HCT116 (cell line): ENCODE measurements at regions of chr1 and their contacts with region 1.

Region 1: DNA sequence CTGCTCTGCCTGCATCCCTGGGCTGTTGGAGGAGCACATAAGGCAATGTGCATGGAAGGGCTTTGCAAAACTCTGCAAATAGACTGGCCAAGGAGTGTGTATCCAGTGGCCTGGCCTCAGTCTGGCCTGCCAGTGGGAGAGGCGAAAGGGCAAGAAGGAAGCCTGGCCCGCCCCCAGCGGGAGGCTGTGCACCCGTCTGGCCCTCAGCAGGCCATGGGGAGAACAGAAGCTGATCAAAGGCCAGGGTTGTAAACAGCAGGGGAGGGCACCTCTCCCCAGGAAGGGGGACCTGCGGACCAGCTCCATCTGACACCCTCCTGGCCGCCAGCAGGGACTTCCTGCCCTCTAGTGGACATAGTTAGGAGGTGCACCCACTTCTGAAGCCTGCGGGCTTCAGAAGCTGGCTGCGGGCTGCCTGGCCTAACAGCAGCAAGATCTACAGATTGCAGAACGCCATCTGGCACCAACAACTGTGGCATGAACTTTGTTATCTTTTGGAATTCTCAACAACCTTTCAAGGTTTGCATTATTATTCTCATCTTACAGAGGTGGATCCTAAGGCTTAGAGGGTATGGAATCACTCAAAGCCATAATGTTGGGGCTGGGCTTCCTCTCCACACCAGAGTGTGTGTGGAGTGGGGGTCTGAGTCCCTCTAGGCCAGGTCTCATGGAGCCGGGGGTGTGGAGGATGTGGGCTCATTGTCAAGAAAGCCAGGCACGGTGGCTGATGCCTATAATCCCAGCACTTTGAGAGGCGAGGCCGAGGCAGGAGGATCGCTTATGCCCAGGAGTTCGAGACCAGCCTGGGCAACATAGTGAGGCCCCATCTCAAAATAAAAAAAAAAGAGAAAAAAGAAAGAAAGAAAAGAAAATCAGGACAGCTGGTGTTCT is 18.9 kb upstream of the CDK18 start:
- DNase-seq: peak; percentile 56
- ATAC-seq: peak; percentile 83
- H3K4me3 ChIP-seq: no peak overlapping the region
- H3K27ac ChIP-seq: no peak overlapping the region
- H3K4me1 ChIP-seq: peaks cover 0 to 8% of the 10 kb centered on the region in 2 experiments; a peak in 3 of 4 replicates
- H3K27me3 ChIP-seq: peaks cover 18% of the 10 kb centered on the region
- CTCF ChIP-seq: peak; percentile 93 to 98 (median 95)
- POLR2A ChIP-seq: no peak
- RAD21 ChIP-seq: peak; percentile 100

Region 2: GRCh38 chr1:205211169-205211838 is 274.3 kb before region 1 on chr1 and contains the start of gene DSTYK:
- CTCF ChIA-PET with region 1: no interaction called
- POLR2A ChIA-PET with region 1: no interaction called
- RAD21 ChIA-PET with region 1: no interaction called
- intact Hi-C with region 1: no loop called
- DNase-seq: peak; percentile 92
- ATAC-seq: peak; percentile 91
- H3K4me3 ChIP-seq: peak within 1 kb of the TSS; percentile 74 to 99
- H3K27ac ChIP-seq: peak within 1 kb of the TSS; percentile 74
- H3K4me1 ChIP-seq: peaks cover 2 to 16% of the 10 kb centered on the region in 2 experiments; a peak in 2 of 4 replicates
- H3K27me3 ChIP-seq: no peaks in the 10 kb centered on the region
- CTCF ChIP-seq: no peak
- POLR2A ChIP-seq: peak; percentile 86
- RAD21 ChIP-seq: peak; percentile 40
- total RNA-seq, gene DSTYK: 6.6 TPM

Region 3: DNA sequence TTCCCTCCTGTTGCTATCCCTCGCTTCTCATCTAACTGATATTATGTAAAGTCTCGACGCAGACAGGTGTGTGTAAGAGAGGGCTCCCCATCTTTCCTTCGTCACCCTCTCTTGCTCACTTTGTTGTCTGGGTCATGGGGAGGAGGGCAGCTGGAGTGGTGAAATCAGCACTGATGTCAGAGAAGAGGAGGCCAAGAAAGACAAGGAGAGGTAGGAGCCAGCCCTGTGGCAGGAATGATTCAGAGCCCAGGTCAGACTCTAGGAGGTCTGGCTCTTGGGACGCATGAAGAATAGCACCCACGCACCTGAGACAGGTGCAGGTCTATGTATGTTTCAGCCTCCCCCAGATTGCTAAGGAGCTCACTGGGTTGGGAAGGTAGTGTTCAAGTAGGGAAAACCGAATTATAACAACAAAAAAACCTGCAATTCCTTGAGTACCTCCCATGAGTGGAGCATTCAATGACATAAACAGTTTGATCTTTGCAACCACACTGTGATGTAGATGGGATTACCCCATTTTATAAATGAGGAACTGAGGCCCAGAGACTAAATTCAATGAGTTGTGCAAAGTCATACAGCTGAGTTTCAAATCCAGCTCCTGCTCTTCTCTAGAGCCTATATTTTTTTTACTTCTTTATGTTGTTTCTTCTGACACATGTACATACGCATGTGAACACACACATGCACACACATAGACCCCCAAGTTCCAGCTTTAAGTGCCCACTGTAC is 174.4 kb before region 1 on chr1:
- CTCF ChIA-PET with region 1: no interaction called
- POLR2A ChIA-PET with region 1: no interaction called
- RAD21 ChIA-PET with region 1: no interaction called
- intact Hi-C with region 1: no loop called
- DNase-seq: no peak
- ATAC-seq: no peak
- H3K4me3 ChIP-seq: no peak overlapping the region
- H3K27ac ChIP-seq: no peak overlapping the region
- H3K4me1 ChIP-seq: peaks cover 0 to 3% of the 10 kb centered on the region in 2 experiments; a peak in 1 of 4 replicates
- H3K27me3 ChIP-seq: no peaks in the 10 kb centered on the region
- CTCF ChIP-seq: no peak
- POLR2A ChIP-seq: no peak
- RAD21 ChIP-seq: no peak

Region 4: DNA sequence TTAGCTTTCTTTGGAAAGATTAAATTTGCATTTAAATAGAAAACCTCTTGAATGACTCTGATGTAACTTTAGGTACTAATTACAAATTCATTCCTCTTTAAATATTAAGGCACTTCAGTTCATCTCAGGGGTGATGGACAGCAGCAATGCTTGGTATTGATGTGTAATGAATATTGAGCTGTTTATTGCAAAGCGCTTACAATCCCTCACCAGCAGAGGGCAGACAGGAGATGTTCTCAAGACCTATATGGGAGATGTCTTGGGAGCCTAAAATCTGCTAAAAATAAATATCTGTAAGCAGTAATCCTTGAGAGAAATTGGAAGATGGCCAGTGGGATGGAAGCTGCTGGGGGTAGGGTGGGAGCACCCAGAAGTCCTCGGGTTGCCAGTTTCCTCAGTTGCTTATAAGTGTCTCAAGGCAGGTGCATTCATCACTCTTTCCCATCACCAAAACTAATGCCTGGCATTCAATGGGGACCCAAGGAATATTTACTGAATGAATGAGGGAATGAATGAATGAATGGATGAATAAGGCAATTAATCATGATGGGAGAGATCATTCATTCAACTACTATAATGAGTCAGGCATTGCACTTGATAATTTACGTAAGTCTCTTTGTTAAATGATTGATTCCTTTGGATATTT is 131.2 kb before region 1 on chr1:
- CTCF ChIA-PET with region 1: interaction called, 49 read pairs
- POLR2A ChIA-PET with region 1: interaction called, 3 read pairs
- RAD21 ChIA-PET with region 1: interaction called, 10 read pairs
- intact Hi-C with region 1: loop called (anchors 1 kb)
- DNase-seq: peak; percentile 54
- ATAC-seq: peak; percentile 80
- H3K4me3 ChIP-seq: no peak overlapping the region
- H3K27ac ChIP-seq: no peak overlapping the region
- H3K4me1 ChIP-seq: peaks cover 2 to 23% of the 10 kb centered on the region in 2 experiments; a peak in 3 of 4 replicates
- H3K27me3 ChIP-seq: no peaks in the 10 kb centered on the region
- CTCF ChIP-seq: peak; percentile 75 to 86 (median 84)
- POLR2A ChIP-seq: no peak
- RAD21 ChIP-seq: peak; percentile 74

Region 5: DNA sequence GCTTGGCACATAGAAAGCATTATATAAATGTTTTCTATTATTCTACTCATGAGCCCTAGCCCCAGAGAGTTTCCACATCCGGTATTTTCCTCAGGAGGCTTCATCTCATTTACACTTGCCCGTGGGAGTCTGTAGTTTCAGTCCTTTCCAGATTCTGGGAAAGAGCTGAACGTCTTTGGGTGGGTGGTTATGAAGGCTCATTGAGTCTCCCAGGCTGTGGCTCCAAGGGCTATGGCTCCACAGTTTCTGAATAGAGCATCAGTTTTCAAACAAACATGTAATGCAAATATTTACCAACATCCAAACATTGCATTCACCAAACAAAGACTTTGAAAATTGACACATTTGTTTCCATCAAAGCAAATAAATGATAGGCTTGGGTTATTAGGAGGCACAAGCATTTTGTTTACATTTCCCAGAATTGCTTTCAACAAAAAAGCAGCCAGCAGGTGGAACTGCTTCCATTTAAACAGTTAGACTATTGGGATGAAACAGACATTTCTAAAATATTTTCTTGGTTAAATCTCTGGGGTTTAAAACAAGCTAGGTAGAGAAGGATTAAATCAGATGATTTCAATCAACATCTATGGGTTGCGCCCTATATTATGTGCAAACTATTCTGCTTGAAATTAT is 62.5 kb before region 1 on chr1:
- CTCF ChIA-PET with region 1: interaction called, 12 read pairs
- POLR2A ChIA-PET with region 1: no interaction called
- RAD21 ChIA-PET with region 1: no interaction called
- intact Hi-C with region 1: loop called (anchors 1 kb)
- DNase-seq: no peak
- ATAC-seq: no peak
- H3K4me3 ChIP-seq: no peak overlapping the region
- H3K27ac ChIP-seq: no peak overlapping the region
- H3K4me1 ChIP-seq: no peaks in the 10 kb centered on the region
- H3K27me3 ChIP-seq: peaks cover 29% of the 10 kb centered on the region
- CTCF ChIP-seq: peak in 2 of 3 experiments; percentile 45 to 68; a peak in 3 of 6 replicates
- POLR2A ChIP-seq: no peak
- RAD21 ChIP-seq: peak; percentile 69

Region 6: DNA sequence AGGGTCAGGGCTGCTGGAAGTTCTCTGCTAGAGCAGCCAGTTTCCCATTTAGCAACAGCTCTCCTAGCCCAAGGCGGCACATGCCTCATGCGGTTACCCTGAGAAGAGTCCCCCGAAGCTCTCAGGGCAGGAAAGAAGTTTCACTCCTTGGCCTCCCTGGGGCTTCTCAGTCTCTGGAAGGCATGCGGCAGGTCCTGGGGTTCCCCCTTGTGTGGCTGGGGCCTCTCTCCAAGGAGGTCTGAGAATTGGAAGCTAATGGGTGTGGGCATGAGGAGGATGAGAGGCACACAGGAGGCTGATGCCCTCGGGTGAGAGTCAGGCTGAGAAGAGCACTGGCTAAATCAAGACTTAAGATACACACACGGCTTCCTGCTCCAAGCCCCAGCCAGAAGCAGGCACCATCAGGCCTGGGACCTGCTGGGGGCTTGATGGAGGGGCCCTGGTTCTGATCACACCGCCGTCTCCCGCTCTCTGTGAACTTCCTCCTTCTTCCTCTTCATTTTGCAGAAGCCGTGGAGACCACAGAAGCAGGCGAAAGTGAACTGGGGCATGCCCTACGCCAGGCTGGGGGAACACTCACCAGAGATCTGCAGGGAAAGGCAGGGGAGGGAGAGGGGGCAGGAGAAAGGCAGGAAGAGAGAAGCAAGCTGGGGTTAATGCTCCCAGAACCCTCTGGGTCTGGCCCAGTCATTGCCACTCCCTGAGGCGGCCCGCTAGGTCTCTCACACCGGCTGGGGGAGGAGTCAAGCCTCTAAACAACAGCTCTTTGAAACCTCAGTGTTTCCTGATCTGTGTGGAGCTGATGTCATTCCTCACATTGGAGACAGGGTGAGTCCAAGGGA is 44.9 kb before region 1 on chr1:
- CTCF ChIA-PET with region 1: interaction called, 37 read pairs
- POLR2A ChIA-PET with region 1: interaction called, 8 read pairs
- RAD21 ChIA-PET with region 1: interaction called, 11 to 17 read pairs
- intact Hi-C with region 1: loop called (anchors 5 kb)
- DNase-seq: peak; percentile 85
- ATAC-seq: peak; percentile 86
- H3K4me3 ChIP-seq: peak overlapping the region in 1 of 2 experiments; percentile 21; a peak in 1 of 4 replicates
- H3K27ac ChIP-seq: peak overlapping the region; percentile 80
- H3K4me1 ChIP-seq: peaks cover 54 to 76% of the 10 kb centered on the region in 2 experiments
- H3K27me3 ChIP-seq: no peaks in the 10 kb centered on the region
- CTCF ChIP-seq: no peak
- POLR2A ChIP-seq: no peak
- RAD21 ChIP-seq: no peak

Region 7: DNA sequence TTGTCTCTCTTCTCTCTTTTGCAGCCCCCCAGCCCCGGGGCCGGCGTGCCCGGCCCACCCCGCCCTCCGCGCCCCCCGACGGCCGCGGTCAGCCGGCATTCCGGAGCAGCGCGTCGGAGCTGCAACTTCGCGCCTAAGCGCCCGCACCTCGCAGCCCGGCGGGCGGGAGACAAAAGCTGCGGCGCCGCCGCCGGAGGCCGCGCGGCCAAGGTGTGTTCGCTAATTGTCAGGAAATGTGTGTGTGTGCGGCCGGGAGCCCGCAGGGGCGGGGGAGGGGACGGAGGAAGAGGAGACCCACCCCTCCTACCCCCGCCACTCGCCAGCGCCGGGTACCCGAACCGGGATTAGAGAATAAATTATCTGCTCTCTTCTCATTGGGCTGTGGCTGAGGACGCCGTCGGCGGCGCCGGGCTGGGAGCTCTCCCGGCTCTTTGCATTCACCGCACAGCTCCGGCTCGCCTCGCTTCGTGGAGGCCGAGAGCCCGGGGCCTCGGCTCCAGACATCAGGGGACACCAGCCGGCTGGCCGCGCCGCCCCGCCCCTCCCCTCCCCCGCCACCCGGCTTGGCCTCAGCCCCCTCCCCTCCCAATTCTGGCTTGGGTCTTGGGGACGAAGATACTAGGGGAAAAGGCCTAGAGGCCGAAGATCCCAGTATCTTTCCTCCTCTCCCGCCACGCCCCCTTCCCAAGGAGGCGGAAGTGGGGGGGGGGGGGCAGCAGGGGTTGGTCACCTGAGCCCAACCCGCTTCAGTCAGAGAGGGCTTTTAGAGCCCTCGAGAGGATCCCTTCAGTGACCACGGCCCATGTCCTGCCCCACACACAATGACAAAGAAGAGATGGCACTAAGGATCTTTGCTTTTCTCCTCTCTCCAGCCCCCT is 28.5 kb before region 1 on chr1:
- CTCF ChIA-PET with region 1: interaction called, 11 read pairs
- POLR2A ChIA-PET with region 1: no interaction called
- RAD21 ChIA-PET with region 1: interaction called in 1 of 2 experiments, 5 read pairs
- intact Hi-C with region 1: no loop called
- DNase-seq: no peak
- ATAC-seq: peak; percentile 78
- H3K4me3 ChIP-seq: peak overlapping the region; percentile 45 to 60
- H3K27ac ChIP-seq: peak overlapping the region; percentile 23; the same call in 1 of the 2 replicates
- H3K4me1 ChIP-seq: peaks cover 11 to 40% of the 10 kb centered on the region in 2 experiments
- H3K27me3 ChIP-seq: peaks cover 11% of the 10 kb centered on the region; the same call in 1 of the 2 replicates
- CTCF ChIP-seq: no peak
- POLR2A ChIP-seq: no peak
- RAD21 ChIP-seq: no peak